ENCODE measurements at regions of chr11 and their contacts with region 1.

Region 1: GRCh38 chr11:65290448-65291165 is 24.1 kb upstream of the CDC42EP2 start:
- DNase-seq: peak; percentile 34 to 56 (median 46)
- ATAC-seq: peak; percentile 84
- H3K4me3 ChIP-seq: no peak overlapping the region
- H3K27ac ChIP-seq: peak overlapping the region; percentile 24; the same call in 1 of the 3 replicates
- H3K4me1 ChIP-seq: peaks cover 2 to 20% of the 10 kb centered on the region in 2 experiments; a peak in 4 of 5 replicates
- H3K27me3 ChIP-seq: no peaks in the 10 kb centered on the region
- CTCF ChIP-seq: no peak
- EP300 ChIP-seq: no peak
- POLR2A ChIP-seq: no peak
- RAD21 ChIP-seq: no peak

Region 2: DNA sequence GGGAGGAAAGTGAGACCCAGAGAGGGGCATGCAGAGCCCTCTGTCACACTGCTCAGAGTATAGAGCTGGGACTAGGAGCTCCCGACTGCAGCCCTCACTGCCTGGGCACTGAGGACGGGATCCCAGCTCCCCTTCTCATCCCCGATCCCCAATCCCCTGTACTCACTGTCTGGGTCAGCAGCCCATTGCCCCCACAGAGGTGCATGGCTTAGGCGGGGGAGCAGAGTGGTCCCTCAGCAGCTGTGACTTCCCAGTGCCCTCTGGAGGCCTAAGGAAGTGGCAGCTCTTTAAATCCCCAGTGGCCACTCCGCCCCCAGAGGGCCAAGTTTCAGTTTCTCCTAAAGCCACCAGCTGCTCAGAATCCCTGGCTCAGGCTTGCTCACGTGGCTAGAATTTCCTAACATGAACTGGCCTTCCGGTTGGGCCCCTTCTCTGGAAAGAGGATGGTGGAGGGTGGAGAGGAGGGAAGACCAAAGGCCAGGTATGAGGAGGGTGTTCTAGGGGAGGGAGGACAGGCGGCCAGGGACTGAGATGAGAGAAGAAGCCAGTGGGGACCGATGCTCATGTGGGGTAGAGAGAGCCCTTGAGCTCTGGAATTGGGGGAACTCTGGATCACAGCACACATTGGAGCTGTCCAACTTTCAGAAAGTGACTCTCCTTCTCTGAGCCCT is 293.8 kb before region 1 on chr11 and contains the start of gene BATF2:
- CTCF ChIA-PET with region 1: no interaction called
- POLR2A ChIA-PET with region 1: no interaction called
- in situ Hi-C with region 1: no loop called
- intact Hi-C with region 1: no loop called
- DNase-seq: peak; percentile 86 to 91 (median 88)
- ATAC-seq: peak; percentile 91
- H3K4me3 ChIP-seq: peak within 1 kb of the TSS; percentile 33
- H3K27ac ChIP-seq: peak within 1 kb of the TSS; percentile 52
- H3K4me1 ChIP-seq: peaks cover 23% of the 10 kb centered on the region in 2 experiments; a peak in 4 of 5 replicates
- H3K27me3 ChIP-seq: no peaks in the 10 kb centered on the region
- CTCF ChIP-seq: peak; percentile 80 to 97 (median 97)
- EP300 ChIP-seq: peak; percentile 12; the same call in 1 of the 2 replicates
- POLR2A ChIP-seq: peak; percentile 62
- RAD21 ChIP-seq: peak; percentile 88
- polyA plus RNA-seq, gene BATF2: 1.7 to 1.9 TPM

Region 3: GRCh38 chr11:65180877-65181568 is 109.6 kb before region 1 on chr11:
- CTCF ChIA-PET with region 1: no interaction called
- POLR2A ChIA-PET with region 1: no interaction called
- in situ Hi-C with region 1: no loop called
- intact Hi-C with region 1: no loop called
- DNase-seq: peak; percentile 73 to 84 (median 80)
- ATAC-seq: peak; percentile 86
- H3K4me3 ChIP-seq: peak overlapping the region; percentile 98
- H3K27ac ChIP-seq: peak overlapping the region; percentile 77
- H3K4me1 ChIP-seq: peaks cover 11 to 44% of the 10 kb centered on the region in 2 experiments
- H3K27me3 ChIP-seq: no peaks in the 10 kb centered on the region
- CTCF ChIP-seq: peak; percentile 68 to 77 (median 70)
- EP300 ChIP-seq: no peak
- POLR2A ChIP-seq: no peak
- RAD21 ChIP-seq: peak; percentile 64 to 73

Region 4: GRCh38 chr11:65301491-65302329 is 11.1 kb after region 1 on chr11:
- CTCF ChIA-PET with region 1: no interaction called
- POLR2A ChIA-PET with region 1: interaction called, 17 read pairs
- in situ Hi-C with region 1: no loop called
- intact Hi-C with region 1: no loop called
- DNase-seq: peak; percentile 49 to 64 (median 60)
- ATAC-seq: peak; percentile 89
- H3K4me3 ChIP-seq: no peak overlapping the region
- H3K27ac ChIP-seq: peak overlapping the region; percentile 23; the same call in 1 of the 3 replicates
- H3K4me1 ChIP-seq: peaks cover 12 to 20% of the 10 kb centered on the region in 2 experiments; a peak in 4 of 5 replicates
- H3K27me3 ChIP-seq: no peaks in the 10 kb centered on the region
- CTCF ChIP-seq: no peak
- EP300 ChIP-seq: no peak
- POLR2A ChIP-seq: no peak
- RAD21 ChIP-seq: no peak

Measured in K562 (cell line).